Gastrocnemius medialis (tissue), 4 donors: ENCODE measurements at regions of chr6 and their contacts with region 1.

Region 1: DNA sequence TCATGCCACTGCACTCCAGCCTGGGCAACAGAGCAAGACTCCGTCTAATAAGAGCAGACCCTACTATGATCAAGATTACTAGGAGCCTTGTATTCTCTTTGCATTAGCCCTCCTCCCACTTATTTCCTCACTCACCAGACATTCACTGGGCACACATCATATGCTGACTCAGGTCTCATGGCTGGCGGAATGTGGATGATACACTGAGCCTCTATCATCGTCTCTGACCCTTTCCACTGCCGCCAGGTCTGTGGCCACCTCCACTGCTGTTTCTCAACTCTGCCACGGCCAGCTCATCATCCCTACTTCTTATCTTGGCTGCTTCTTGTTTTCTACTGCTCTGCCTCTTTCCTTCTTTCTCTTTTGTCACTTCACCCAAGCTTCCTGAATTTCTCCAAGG is 161.0 kb downstream of the BACH2 start:
- DNase-seq: peak; percentile 22 to 72
- ATAC-seq: peak; percentile 60 to 68
- H3K4me3 ChIP-seq: no peak overlapping the region
- H3K27ac ChIP-seq: peak overlapping the region; percentile 59 to 75 (median 74)
- H3K4me1 ChIP-seq: peaks cover 44% of the 10 kb centered on the region in 2 donors
- H3K27me3 ChIP-seq: no peaks in the 10 kb centered on the region
- CTCF ChIP-seq: no peak
- POLR2A ChIP-seq: no peak

Region 2: DNA sequence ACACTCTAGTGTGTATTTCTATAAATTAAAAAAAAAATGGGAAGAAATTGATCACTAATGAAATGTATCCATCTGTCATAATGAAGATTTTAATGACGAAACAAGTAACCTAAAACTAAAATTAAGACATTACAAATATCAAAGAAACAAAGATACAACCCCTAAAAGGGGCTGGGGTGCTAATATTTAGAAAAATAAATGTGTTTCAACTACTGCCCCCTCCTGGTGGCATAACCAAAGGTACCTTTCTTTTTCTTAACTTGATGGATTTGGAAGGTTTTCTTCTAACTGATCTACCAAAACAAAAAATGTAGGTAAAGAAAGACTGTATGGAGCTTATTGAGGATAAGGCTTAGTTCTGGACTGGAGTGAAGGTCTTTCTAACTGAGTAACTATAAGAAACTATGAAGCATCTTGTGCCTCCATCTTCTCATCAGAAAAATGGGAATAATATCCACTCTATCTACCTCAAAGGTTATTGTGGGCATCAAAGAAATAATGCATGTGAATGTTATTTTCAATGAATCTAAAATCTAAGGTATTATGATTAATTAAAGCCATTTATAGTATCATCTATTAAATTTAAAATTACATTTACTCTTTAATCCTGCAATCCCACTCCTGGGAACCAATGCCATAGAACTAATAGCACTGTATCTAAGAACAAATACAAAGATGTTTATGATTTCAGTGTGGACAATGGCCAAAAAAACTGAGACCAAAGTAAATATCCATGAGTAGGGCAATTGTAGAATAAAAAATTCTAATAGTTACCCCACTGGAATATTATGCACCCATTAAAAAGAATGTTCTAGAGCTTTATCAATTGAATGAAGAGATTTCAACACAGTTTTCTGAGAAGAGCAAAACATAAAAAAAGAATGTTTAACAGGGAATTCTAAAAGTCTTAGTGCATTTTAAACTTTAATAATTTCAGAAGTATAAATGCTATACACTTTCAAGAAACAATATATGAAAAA is 43.8 kb after region 1 on chr6:
- in situ Hi-C with region 1: no loop called
- intact Hi-C with region 1: loop called (anchors 5 kb)
- DNase-seq: no peak
- ATAC-seq: no peak
- H3K4me3 ChIP-seq: no peak overlapping the region
- H3K27ac ChIP-seq: no peak overlapping the region
- H3K4me1 ChIP-seq: peaks cover 40% of the 10 kb centered on the region in 2 donors
- H3K27me3 ChIP-seq: no peaks in the 10 kb centered on the region
- CTCF ChIP-seq: peak in 1 of 5 experiments; percentile 31
- POLR2A ChIP-seq: no peak